GM10248 (cell line): ENCODE measurements at regions of chr1 and their contacts with region 1.

Region 1: DNA sequence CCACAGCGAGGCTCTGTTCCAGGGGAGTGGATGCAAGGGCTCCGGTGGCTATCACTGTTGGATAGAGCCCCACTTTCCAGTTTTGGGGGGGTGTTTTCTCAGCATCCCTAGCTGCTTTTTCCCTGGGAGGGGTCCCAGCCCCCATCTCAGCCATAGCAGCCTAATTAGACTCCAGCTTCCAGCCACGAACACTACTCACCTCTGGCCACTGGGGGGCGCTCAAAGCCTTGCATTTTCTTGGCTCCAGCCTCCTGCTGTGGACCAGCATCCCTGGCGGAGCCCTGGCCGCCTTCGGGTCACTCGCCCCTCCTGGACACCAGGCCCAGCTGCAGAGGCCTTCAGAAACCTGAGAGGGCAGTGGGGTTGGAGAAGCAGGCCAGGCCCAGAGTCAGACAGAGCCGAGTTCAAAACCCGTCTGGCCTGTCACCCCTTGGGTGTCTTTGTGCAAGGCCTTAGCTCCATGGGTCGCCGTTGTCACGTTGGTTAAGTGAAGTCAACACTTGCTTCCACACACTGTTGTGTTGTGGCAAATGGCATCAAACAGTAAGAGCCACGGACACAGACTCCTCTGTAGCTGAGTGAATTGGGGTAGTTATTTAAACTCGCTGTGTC is 93.5 kb upstream of the ACTL8 start:
- DNase-seq: peak; percentile 85
- CTCF ChIP-seq: peak; percentile 79

Region 2: DNA sequence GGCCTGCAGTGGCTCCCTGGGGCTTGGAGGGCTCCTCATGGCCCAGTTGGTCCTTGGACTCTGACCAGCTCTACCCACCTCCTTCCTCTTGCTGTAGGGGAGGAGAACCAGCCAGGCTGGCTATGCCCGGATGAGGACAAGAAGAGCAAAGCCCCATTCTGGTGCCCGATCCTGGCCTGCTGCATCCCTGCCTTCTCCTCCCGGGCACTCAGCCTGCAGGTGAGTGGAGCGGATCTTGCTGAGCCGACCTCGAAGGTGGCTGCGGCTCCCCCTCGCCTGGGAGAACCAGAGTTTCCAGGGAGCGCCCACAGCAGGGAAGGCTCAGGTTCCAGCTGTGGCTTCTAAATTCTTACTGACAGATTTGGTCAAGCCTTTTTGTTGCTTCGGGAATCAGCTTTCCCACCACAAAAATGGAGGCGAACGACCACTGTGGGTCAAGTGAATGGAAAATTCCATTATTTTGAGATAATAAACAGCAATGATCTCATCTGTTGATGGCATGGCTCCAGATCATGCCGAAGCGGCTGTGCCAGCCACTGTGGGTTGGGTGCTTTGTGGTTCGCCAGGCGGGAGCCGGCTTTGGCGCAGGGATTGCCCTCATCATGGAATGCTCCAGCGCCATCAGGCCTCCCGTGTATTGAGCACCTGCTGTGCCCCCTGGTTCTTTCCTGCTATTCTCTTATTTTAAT is 13.1 kb before region 1 on chr1:
- CTCF ChIA-PET with region 1: interaction called, 27 read pairs
- POLR2A ChIA-PET with region 1: no interaction called
- DNase-seq: no peak
- CTCF ChIP-seq: no peak

Region 3: DNA sequence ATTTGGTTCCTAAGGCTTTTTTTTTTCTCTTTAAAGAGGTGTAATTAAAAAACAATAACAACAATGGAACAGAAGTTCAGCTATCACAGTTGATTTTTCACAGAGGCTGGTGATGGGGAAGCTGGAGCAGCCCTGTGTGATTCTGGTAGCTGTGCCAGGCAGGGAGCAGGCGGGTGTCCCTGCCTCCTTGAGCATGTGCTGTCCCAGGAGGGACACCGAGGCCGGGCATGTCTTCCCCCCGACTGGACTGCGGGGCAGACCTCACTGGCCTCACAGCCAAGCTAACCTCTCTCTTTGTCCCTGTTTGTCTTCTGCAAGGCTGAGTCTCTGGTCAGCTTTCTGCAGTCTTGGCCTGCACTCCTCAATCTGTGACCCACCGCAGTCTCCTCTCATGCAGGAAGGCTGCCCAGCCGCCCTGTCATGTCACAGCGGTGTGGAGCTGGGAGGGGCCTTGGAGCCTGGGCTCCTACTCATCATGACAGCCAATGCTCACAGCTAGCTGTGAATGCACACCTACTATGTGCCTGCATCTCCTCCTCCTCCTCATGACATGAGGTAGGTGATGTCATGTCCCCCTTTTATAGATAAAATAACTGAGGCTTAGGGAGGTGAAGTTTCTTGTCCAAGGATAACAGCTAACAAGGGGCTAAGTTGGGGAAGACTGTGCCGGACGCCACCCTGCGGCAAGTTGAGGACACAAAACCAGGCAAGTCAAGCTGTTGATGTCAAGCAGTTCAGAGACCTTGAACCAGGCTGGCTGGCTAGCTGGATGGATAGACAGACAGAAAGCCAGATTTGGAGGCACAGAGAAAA is 83.2 kb after region 1 on chr1:
- CTCF ChIA-PET with region 1: no interaction called
- POLR2A ChIA-PET with region 1: no interaction called
- DNase-seq: no peak
- CTCF ChIP-seq: no peak

Region 4: DNA sequence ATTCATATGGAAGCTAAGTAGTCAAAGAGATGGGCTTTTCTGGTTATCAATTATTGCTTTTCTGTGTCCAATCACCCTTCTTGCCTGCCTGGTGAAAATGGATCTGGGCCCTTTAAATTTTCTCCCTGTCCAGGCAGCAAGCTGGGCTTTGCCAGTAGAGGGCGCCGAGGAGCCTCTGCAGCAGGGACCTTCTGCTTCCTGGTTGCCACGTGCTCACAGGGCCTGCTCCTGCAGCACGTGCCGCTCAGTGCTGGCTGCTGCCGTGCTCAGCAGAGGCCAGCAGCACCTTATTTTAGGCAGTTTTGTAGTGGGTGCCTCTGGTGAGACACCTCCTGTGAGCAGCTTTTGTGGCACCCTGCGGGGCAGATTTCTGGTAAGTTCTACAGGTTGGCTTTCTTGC is 97.5 kb after region 1 on chr1:
- CTCF ChIA-PET with region 1: no interaction called
- POLR2A ChIA-PET with region 1: no interaction called
- DNase-seq: no peak
- CTCF ChIP-seq: peak; percentile 6

Region 5: GRCh38 chr1:17819129-17819802 is 157.6 kb after region 1 on chr1:
- CTCF ChIA-PET with region 1: no interaction called
- POLR2A ChIA-PET with region 1: no interaction called
- DNase-seq: no peak
- CTCF ChIP-seq: no peak

Region 6: GRCh38 chr1:17874710-17875109 is 213.1 kb after region 1 on chr1:
- CTCF ChIA-PET with region 1: no interaction called
- POLR2A ChIA-PET with region 1: no interaction called
- DNase-seq: no peak
- CTCF ChIP-seq: no peak

Region 7: DNA sequence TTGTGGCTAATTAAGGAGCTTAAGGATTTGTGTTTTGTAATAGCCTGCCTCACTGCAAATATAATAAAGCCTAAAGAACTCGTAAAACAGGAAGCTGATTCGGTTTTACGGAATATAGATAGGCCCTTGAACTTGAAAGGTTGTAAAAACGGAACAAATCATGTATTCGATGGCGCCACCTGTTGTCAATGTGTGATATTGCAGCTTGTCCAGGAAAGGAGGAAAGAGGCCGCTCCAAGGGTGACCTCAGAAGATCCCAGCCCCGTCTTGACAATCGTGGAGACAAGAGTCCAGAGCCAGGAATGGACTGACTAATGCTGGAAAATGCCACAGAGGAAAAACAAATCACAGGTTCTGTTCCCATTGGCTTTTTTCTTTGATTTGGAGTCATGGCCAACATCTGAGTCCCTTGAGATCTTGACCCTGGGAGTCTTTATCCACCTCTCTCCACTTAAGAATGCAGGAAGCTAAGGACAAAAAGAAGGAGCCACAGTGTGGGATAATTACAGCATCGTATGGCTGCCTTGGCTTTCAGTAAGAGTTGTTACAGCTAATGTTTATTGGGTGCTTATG is 438.9 kb after region 1 on chr1:
- CTCF ChIA-PET with region 1: interaction called, 42 read pairs
- POLR2A ChIA-PET with region 1: no interaction called
- DNase-seq: peak; percentile 63
- CTCF ChIP-seq: peak; percentile 62

Region 8: GRCh38 chr1:18581420-18581880 is 919.8 kb after region 1 on chr1:
- CTCF ChIA-PET with region 1: interaction called, 20 read pairs
- POLR2A ChIA-PET with region 1: no interaction called
- DNase-seq: peak; percentile 79
- CTCF ChIP-seq: peak; percentile 70